GM10248 (cell line): ENCODE measurements at regions of chr10 and their contacts with region 1.

Region 1: DNA sequence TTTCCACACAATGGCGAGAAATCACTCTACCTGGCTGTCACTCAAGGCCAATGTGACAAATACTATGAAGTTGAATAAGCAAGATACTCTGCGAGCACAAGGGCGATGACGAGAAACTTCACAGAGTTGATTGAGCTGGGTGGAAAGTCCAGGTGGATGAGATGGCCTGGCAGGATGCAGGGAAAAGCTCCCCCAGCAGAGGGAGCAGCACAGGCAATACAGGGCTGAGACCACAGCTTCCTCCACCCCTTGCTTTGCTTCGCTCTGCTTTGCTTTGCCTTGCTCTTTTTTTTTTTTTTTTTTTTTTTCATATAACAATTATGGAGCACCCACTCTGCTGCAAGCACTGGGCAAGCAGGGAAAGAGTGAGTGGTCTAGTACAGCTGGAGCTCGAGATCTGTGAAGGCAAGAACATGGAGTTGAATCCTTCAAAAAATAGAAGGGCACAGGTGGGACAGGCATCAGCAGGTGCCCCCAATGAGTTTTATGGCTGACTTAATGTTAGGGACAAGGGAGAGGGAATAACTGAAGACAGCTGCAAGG is 88.3 kb downstream of the CABCOCO1 start:
- DNase-seq: peak; percentile 53
- CTCF ChIP-seq: peak; percentile 69

Region 2: GRCh38 chr10:61503051-61503450 is 247.9 kb before region 1 on chr10:
- CTCF ChIA-PET with region 1: no interaction called
- POLR2A ChIA-PET with region 1: no interaction called
- DNase-seq: no peak
- CTCF ChIP-seq: no peak

Region 3: DNA sequence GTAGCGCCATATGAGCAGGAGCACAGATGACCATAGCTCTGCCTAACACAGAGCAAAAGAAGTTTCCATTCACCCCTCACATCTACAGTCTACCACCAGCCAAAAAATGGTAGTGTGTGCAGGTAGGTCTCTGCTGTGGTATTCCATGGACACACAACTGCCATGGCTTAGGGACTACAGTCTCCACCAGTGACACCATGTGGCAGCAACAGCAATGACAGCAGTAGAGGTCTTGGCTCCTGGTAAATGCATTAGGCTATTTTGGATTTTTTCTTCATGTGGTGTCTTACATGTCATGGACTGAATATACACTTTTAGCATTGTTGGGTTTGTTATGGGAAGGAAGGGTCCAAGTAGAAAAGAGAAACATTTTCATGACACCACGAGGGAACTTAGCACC is 158.4 kb before region 1 on chr10:
- CTCF ChIA-PET with region 1: no interaction called
- POLR2A ChIA-PET with region 1: no interaction called
- DNase-seq: no peak
- CTCF ChIP-seq: peak; percentile 21

Region 4: GRCh38 chr10:61669161-61669725 is 81.8 kb before region 1 on chr10:
- CTCF ChIA-PET with region 1: no interaction called
- POLR2A ChIA-PET with region 1: no interaction called
- DNase-seq: no peak
- CTCF ChIP-seq: no peak

Region 5: DNA sequence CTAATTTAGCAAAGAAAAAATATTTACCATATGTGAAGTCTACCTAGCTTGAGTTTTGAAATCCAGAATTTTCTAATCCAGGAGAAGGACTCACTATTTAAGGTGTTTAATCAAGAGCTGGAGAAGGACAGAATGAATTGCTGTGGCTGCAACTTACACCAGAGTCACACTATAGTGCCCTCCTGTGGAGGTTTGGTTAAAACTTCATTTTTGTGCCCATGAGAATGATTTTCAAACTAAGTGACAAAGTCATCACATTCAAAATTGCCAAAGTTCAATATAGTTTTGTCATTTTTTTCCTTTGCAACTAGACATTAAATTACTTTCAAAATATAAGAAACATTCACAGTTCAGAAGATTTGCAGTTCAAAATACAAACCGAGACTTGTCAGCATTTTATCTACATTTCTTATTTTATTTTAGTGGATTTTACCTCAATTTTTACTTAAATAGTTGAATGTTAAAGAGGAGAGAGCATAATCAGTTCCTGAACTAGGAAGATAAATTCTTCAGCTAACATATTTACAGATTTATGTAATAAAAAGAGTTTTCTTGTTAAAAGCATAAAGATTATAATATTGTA is 17.6 kb before region 1 on chr10:
- CTCF ChIA-PET with region 1: interaction called, 23 read pairs
- POLR2A ChIA-PET with region 1: no interaction called
- DNase-seq: peak; percentile 6
- CTCF ChIP-seq: peak; percentile 47

Region 6: DNA sequence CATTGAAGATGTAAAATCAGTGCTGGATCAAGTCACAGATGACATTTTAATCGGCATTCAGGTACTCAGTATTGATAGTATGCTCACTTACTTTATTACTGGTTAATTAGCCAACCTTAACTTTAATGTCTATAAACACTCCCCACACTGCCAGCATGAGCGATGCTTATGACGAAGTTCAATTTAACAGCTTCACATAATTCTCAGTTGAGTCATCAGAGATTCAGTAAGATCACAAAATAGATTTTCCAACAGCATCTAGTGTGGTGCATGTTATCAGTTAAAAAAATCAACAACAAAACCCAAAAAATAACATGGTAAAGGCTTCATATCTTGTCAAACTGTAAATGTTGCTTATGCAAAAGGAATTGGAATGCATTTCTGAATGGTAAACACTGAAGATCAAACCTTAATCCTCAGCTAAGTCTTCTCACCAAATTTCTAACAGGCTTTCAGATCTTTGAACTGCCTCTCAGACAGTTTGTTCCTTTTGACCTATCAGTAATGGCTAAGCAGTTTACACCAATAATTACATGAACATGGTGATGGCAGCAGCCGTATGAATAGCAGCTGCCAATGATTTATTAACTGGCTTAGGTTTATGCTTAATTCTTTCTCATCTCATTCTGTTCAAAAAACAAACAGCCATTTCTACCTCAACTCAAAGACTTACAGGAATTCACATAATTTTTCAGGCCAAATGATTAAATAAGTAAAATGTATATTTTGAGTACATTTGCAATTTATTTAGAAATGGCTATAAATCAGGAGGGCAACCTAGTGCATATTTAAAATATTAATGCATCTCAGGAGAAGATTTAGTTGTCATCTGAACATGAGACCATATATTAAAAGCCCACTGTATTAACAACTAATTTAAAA is 10.2 kb after region 1 on chr10:
- CTCF ChIA-PET with region 1: interaction called, 33 read pairs
- POLR2A ChIA-PET with region 1: no interaction called
- DNase-seq: no peak
- CTCF ChIP-seq: no peak

Region 7: DNA sequence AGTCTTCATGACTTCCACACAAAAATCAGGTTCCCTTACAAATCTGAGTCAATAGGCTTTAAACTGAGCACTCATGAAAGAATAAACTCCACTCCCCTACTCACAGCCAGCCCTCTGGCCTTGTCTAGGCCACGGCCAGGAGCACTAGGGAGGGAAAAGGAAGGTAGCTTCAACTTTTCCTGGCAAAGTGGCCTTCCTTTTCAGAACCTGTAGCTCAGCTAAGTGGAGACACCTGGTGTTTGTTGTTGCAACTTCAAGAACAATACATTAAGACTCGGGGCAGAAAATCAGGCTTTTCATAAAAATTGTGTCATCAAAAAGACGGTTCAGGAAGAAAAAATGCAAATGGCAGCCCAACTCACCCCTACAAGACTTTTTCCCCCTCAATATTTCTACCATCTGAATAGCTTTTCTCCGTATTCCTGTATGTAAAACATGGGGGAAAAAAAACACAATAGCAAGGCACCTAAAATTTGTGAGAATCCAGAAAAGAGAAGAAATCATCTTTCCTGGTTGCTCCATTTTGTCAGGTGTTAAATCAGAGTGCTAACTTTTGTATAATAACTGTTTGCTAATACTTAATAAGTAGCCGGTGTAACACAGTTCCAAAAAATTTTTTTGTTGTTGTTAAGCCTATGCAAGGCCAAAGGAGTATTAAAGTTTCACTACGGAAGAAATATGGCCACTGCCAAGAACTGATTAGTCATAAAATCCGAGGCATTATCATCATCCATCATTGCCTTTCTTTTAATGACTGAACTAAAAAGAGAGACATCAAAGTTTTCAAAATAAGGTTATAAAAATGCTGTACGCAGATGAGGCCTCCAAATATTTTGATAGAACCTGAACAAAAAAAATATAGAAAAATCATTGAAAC is 84.3 kb after region 1 on chr10:
- CTCF ChIA-PET with region 1: interaction called, 21 read pairs
- POLR2A ChIA-PET with region 1: interaction called, 3 read pairs
- DNase-seq: no peak
- CTCF ChIP-seq: peak; percentile 15

Region 8: GRCh38 chr10:61869774-61870525 is 119.0 kb after region 1 on chr10:
- CTCF ChIA-PET with region 1: interaction called, 16 read pairs
- POLR2A ChIA-PET with region 1: no interaction called
- DNase-seq: no peak
- CTCF ChIP-seq: no peak